ENCODE measurements at regions of chr16 and their contacts with region 1.

Region 1: GRCh38 chr16:2486645-2487516 is 12.0 kb downstream of the TBC1D24 start:
- DNase-seq: peak; percentile 89
- H3K4me3 Mint-ChIP-seq: peak overlapping the region; percentile 41
- H3K27ac Mint-ChIP-seq: peak overlapping the region; percentile 38
- H3K4me1 Mint-ChIP-seq: peaks cover 13% of the 10 kb centered on the region
- H3K27me3 Mint-ChIP-seq: no peaks in the 10 kb centered on the region

Region 2: DNA sequence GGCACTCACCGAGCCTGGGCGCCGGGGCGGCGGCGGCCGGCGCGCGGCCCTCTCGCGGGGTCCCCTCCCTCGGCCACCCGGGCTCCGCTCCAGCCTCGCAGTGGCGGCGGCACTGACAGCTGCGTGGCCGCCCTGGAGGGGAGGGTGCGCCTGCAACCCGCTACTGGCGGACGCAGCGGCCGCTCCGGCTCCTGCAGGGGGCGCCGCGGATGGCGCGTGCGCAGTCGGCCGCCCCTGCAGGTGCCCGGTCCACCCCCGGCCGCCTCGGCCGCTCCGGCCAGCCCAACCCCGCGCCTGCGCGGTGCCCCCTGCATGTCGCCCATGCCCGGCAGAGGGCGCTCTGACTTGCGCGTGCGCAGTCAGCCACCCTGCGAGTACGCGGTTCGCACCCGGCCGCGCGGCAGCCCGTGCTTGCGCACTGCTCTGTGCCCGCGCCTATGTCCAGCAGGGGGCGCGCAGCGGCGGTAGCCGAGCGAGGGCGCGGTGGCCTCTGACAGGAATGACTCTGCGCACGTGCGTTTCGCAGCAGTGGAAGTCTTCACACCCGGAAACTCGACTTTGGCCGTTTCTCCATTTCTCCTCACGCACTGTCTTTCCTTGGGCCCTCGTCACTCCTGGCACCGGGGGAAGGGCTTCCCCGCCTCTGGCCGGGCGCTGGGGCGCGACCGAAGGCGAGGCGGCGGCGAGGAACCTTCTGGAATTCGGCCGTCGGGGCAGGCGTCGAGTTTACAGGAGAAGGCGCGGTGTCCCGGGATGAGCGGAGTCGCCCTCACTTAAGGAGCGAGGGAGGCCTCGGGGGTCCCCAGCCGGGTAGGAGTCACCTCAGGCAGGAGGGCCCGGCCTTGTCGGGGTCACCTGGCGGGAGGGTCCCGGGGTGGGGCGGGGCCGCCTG is 146.1 kb before region 1 on chr16 and contains the start of gene ABCA3:
- CTCF ChIA-PET with region 1: interaction called, 3 read pairs
- POLR2A ChIA-PET with region 1: no interaction called
- intact Hi-C with region 1: loop called (anchors 1 kb)
- DNase-seq: peak; percentile 98
- H3K4me3 Mint-ChIP-seq: peak within 1 kb of the TSS; percentile 76
- H3K27ac Mint-ChIP-seq: no peak within 1 kb of the TSS
- H3K4me1 Mint-ChIP-seq: peaks cover 22% of the 10 kb centered on the region
- H3K27me3 Mint-ChIP-seq: peaks cover 4% of the 10 kb centered on the region
- total RNA-seq, gene ABCA3: 6.1 to 6.4 TPM

Region 3: GRCh38 chr16:2531767-2532493 is 45.0 kb after region 1 on chr16:
- CTCF ChIA-PET with region 1: no interaction called
- POLR2A ChIA-PET with region 1: no interaction called
- intact Hi-C with region 1: no loop called
- DNase-seq: peak; percentile 99
- H3K4me3 Mint-ChIP-seq: peak overlapping the region; percentile 91
- H3K27ac Mint-ChIP-seq: peak overlapping the region; percentile 94
- H3K4me1 Mint-ChIP-seq: peaks cover 18% of the 10 kb centered on the region
- H3K27me3 Mint-ChIP-seq: no peaks in the 10 kb centered on the region

Measured in activated CD4-positive, alpha-beta memory T cell treated with anti-CD3 and anti-CD28 coated beads for 36 hours (primary cell).